Panc1 (cell line): ENCODE measurements at regions of chr3 and their contacts with region 1.

Region 1: DNA sequence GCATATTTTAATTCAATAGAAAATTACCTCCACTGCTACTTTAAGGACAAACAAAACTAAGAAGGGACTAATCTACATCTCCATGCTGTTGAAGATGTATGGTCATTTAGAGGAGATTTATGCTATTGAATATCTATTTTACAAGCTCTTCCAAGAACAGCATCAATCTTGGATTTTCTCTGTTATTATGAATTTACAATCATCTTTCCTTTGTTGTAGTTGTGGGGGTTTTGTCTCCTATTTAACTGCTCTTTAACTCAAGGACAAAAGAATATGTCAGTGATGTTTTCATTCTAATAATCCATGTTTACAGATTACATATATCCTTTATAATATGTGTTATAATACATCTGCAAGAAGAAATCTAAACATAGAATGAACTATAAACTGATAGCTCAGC is 907.8 kb downstream of the ROBO2 start:
- DNase-seq: no peak
- ATAC-seq: no peak
- H3K4me3 ChIP-seq: no peak overlapping the region
- H3K27ac ChIP-seq: no peak overlapping the region
- H3K4me1 ChIP-seq: no peaks in the 10 kb centered on the region
- H3K27me3 ChIP-seq: no peaks in the 10 kb centered on the region
- CTCF ChIP-seq: no peak

Region 2: GRCh38 chr3:77195766-77196545 is 751.7 kb before region 1 on chr3:
- CTCF ChIA-PET with region 1: no interaction called
- POLR2A ChIA-PET with region 1: interaction called, 10 read pairs
- in situ Hi-C with region 1: no loop called
- intact Hi-C with region 1: no loop called
- DNase-seq: no peak
- ATAC-seq: no peak
- H3K4me3 ChIP-seq: no peak overlapping the region
- H3K27ac ChIP-seq: no peak overlapping the region
- H3K4me1 ChIP-seq: no peaks in the 10 kb centered on the region
- H3K27me3 ChIP-seq: no peaks in the 10 kb centered on the region
- CTCF ChIP-seq: no peak